ENCODE measurements at regions of chr16 and their contacts with region 1.

Region 1: DNA sequence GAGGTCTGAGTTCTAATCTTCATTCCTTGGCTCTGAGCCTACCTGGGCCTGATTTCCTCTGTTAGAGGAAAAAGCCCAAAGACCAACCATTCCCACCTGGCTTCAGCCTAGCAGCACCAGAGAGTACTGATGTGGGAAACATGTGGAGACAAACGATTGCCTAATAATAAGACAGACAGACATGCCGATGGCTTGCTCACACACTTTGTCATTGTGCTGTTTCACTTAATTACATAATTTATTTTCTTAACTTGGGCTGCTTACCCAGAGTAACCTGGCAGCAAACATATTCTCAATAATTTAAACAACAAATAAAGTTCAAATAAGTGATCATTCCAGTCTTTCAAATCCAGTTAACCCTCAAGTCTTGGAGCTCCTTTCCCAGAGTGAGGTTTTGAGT is 83.4 kb downstream of the MAF start:
- DNase-seq: no peak
- H3K4me3 ChIP-seq: no peak overlapping the region
- H3K27ac ChIP-seq: no peak overlapping the region
- H3K4me1 ChIP-seq: no peaks in the 10 kb centered on the region
- H3K27me3 ChIP-seq: no peaks in the 10 kb centered on the region
- CTCF ChIP-seq: no peak

Region 2: GRCh38 chr16:79269211-79269863 is 247.8 kb before region 1 on chr16:
- CTCF ChIA-PET with region 1: no interaction called
- dilution Hi-C with region 1: no loop called
- in situ Hi-C with region 1: no loop called
- intact Hi-C with region 1: no loop called
- DNase-seq: no peak
- H3K4me3 ChIP-seq: no peak overlapping the region
- H3K27ac ChIP-seq: no peak overlapping the region
- H3K4me1 ChIP-seq: no peaks in the 10 kb centered on the region
- H3K27me3 ChIP-seq: no peaks in the 10 kb centered on the region
- CTCF ChIP-seq: no peak

Region 3: GRCh38 chr16:79497606-79498350 is 19.4 kb before region 1 on chr16:
- CTCF ChIA-PET with region 1: interaction called, 15 read pairs
- dilution Hi-C with region 1: no loop called
- in situ Hi-C with region 1: no loop called
- intact Hi-C with region 1: no loop called
- DNase-seq: no peak
- H3K4me3 ChIP-seq: no peak overlapping the region
- H3K27ac ChIP-seq: no peak overlapping the region
- H3K4me1 ChIP-seq: no peaks in the 10 kb centered on the region
- H3K27me3 ChIP-seq: no peaks in the 10 kb centered on the region
- CTCF ChIP-seq: no peak

Measured in mammary epithelial cell (primary cell).